Mammary epithelial cell (primary cell): ENCODE measurements at regions of chr17 and their contacts with region 1.

Region 1: GRCh38 chr17:78645421-78646295 is 68.5 kb upstream of the DNAH17 start:
- DNase-seq: no peak
- H3K4me3 ChIP-seq: no peak overlapping the region
- H3K27ac ChIP-seq: no peak overlapping the region
- H3K4me1 ChIP-seq: no peaks in the 10 kb centered on the region
- H3K27me3 ChIP-seq: no peaks in the 10 kb centered on the region
- CTCF ChIP-seq: no peak

Region 2: GRCh38 chr17:78568494-78569115 is 77.1 kb before region 1 on chr17:
- CTCF ChIA-PET with region 1: no interaction called
- dilution Hi-C with region 1: no loop called
- in situ Hi-C with region 1: no loop called
- intact Hi-C with region 1: no loop called
- DNase-seq: peak; percentile 32
- H3K4me3 ChIP-seq: no peak overlapping the region
- H3K27ac ChIP-seq: no peak overlapping the region
- H3K4me1 ChIP-seq: no peaks in the 10 kb centered on the region
- H3K27me3 ChIP-seq: no peaks in the 10 kb centered on the region
- CTCF ChIP-seq: no peak

Region 3: DNA sequence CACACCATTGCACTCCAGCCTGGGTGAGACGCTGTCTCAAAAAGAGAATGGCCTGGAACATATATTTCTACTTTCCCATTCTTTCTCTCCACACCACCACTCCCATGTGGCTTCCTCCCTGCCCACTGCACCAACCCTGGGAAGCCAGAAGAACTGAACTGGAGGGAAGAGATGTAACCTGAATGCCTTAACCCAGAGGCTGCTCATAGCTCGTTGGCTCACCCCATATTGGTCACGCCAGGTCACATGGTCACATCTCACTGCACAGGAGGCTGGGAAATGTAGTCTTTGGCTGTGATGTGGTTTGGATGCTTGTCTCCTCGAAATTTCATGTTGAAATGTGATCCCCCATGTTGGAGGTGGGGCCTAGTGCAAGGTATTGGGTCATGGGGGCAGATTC is 62.6 kb before region 1 on chr17:
- CTCF ChIA-PET with region 1: no interaction called
- dilution Hi-C with region 1: loop called (anchors 5 kb)
- in situ Hi-C with region 1: no loop called
- intact Hi-C with region 1: no loop called
- DNase-seq: no peak
- H3K4me3 ChIP-seq: no peak overlapping the region
- H3K27ac ChIP-seq: no peak overlapping the region
- H3K4me1 ChIP-seq: no peaks in the 10 kb centered on the region
- H3K27me3 ChIP-seq: no peaks in the 10 kb centered on the region
- CTCF ChIP-seq: no peak

Region 4: DNA sequence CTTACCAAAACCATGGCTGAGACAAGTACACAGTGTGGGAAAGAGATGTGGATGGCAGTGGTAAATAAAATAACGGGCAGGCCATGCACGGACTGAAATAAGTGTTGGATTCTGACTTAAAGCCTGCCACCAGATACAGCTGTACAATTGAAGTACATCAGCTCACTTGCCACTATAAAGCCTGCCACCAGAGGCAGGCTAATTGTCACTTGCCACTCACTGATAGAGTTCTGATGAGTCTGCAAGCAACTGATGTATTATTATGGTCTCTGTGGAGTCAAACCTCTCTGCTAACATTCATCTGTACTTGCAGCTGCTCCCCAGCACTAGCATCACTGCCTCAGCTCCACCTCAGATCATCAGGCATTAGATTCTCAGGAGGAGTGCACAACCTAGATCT is 43.4 kb after region 1 on chr17:
- CTCF ChIA-PET with region 1: no interaction called
- dilution Hi-C with region 1: loop called (anchors 5 kb)
- in situ Hi-C with region 1: no loop called
- intact Hi-C with region 1: no loop called
- DNase-seq: no peak
- H3K4me3 ChIP-seq: no peak overlapping the region
- H3K27ac ChIP-seq: no peak overlapping the region
- H3K4me1 ChIP-seq: no peaks in the 10 kb centered on the region
- H3K27me3 ChIP-seq: no peaks in the 10 kb centered on the region
- CTCF ChIP-seq: peak; percentile 7 to 12